ENCODE measurements at regions of chr19 and their contacts with region 1.

Region 1: GRCh38 chr19:3572132-3572854 is 451 bp upstream of the HMG20B start:
- DNase-seq: peak; percentile 98 to 100 (median 100)
- H3K4me3 ChIP-seq: peak overlapping the region; percentile 60 to 96 (median 83)
- H3K27ac ChIP-seq: peak overlapping the region in 58 of 59 donors; percentile 40 to 99 (median 93)
- H3K27me3 ChIP-seq: no peaks in the 10 kb centered on the region
- CTCF ChIP-seq: peak in 11 of 56 donors; percentile 6 to 39 (median 21)

Region 2: GRCh38 chr19:3544742-3545668 is 27.3 kb before region 1 on chr19:
- intact Hi-C with region 1: loop called (anchors 1 kb)
- DNase-seq: peak; percentile 62 to 91 (median 86)
- H3K4me3 ChIP-seq: peak overlapping the region in 50 of 59 donors; percentile 7 to 65 (median 42)
- H3K27ac ChIP-seq: peak overlapping the region in 58 of 59 donors; percentile 76 to 100 (median 95)
- H3K27me3 ChIP-seq: no peaks in the 10 kb centered on the region
- CTCF ChIP-seq: peak; percentile 68 to 100 (median 95)

Region 3: GRCh38 chr19:3557461-3558248 is 14.6 kb before region 1 on chr19 and contains the start of gene MFSD12:
- intact Hi-C with region 1: loop called in 1 of 2 experiments (anchors 1 kb)
- DNase-seq: peak; percentile 84 to 98 (median 92)
- H3K4me3 ChIP-seq: peak within 1 kb of the TSS; percentile 61 to 100 (median 91)
- H3K27ac ChIP-seq: peak within 1 kb of the TSS in 57 of 59 donors; percentile 38 to 90 (median 81)
- H3K27me3 ChIP-seq: no peaks in the 10 kb centered on the region
- CTCF ChIP-seq: peak in 4 of 56 donors; percentile 4 to 37 (median 15)
- total RNA-seq, gene MFSD12: 54.9 to 119 (median 77.6) TPM

Region 4: DNA sequence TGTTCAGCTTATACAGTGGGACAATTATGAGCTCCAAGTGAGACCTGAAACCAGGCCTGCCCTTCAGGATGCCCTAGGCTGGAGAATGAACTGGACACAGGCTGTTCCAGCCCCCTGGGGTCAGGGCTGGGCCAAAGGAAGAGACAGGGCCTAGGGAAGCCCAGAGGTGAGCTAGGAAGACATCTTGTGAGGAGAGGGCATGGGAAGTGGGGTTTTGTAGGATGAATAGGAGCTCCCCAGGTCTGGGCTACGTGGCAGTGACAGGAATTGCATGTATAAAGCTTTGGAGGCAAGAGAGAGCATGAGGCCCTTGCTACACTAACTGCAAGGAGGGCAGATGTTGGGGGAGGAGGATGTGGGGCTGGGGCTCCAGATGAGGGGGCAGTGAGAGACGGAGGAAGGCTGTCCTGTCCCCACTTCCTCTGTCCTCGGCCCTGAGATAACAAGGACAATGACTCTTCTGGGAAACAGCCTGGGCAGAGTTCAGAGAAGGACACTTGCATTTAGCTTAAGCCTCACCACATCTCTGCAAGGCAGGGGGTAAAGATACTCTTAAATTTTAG is 35.9 kb after region 1 on chr19:
- intact Hi-C with region 1: no loop called
- DNase-seq: no peak
- H3K4me3 ChIP-seq: peak overlapping the region in 1 of 59 donors; percentile 61
- H3K27ac ChIP-seq: peak overlapping the region in 26 of 59 donors; percentile 1 to 79 (median 38)
- H3K27me3 ChIP-seq: peaks cover 0 to 21% (median 0%) of the 10 kb centered on the region in 45 donors
- CTCF ChIP-seq: no peak

Region 5: GRCh38 chr19:3618144-3618810 is 46.0 kb after region 1 on chr19:
- intact Hi-C with region 1: loop called (anchors 5 kb)
- DNase-seq: peak in 8 of 10 donors; percentile 31 to 69 (median 52)
- H3K4me3 ChIP-seq: peak overlapping the region in 1 of 59 donors; percentile 2
- H3K27ac ChIP-seq: peak overlapping the region in 11 of 59 donors; percentile 1 to 67 (median 49)
- H3K27me3 ChIP-seq: no peaks in the 10 kb centered on the region
- CTCF ChIP-seq: peak; percentile 68 to 99 (median 94)

Region 6: GRCh38 chr19:3700221-3701032 is 128.1 kb after region 1 on chr19 and contains the start of gene PIP5K1C:
- intact Hi-C with region 1: loop called in 1 of 2 experiments (anchors 10 kb)
- DNase-seq: peak; percentile 88 to 96 (median 90)
- H3K4me3 ChIP-seq: peak within 1 kb of the TSS; percentile 64 to 97 (median 82)
- H3K27ac ChIP-seq: peak within 1 kb of the TSS in 56 of 59 donors; percentile 20 to 92 (median 84)
- H3K27me3 ChIP-seq: peaks cover 0 to 11% (median 0%) of the 10 kb centered on the region in 45 donors
- CTCF ChIP-seq: peak; percentile 73 to 96 (median 87)
- total RNA-seq, gene PIP5K1C: 52.4 to 207 (median 126) TPM

Measured in dorsolateral prefrontal cortex (tissue), 120 donors.